ENCODE measurements at regions of chr3 and their contacts with region 1.

Region 1: DNA sequence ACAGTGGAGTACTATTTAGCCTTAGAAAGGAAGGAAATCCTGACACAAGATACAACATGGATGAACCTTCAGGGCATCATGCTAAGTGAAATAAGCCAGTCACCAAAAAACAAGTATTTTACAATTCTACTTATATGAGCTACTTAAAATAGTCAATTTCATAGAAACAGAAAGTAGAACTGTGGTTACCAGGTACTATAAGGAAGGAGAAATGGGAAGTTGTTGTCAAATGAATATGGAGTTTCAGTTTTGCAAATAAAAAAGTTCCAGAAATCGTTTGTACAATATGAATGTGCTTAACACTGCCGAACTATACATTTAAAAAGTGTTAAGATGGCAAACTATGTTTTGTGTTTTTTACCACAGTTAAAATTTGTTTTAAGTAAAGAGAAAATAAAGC is 26.8 kb downstream of the TRANK1 start:
- DNase-seq: no peak
- ATAC-seq: peak; percentile 32
- H3K4me3 ChIP-seq: no peak overlapping the region
- H3K4me3 Mint-ChIP-seq: peak overlapping the region in 9 of 10 donors; percentile 2 to 67 (median 56)
- H3K27ac ChIP-seq: no peak overlapping the region
- H3K27ac Mint-ChIP-seq: peak overlapping the region; percentile 12 to 84 (median 66)
- H3K4me1 ChIP-seq: peaks cover 10 to 11% of the 10 kb centered on the region in 2 donors
- H3K4me1 Mint-ChIP-seq: peaks cover 23 to 40% (median 34%) of the 10 kb centered on the region in 7 donors
- H3K27me3 ChIP-seq: no peaks in the 10 kb centered on the region
- H3K27me3 Mint-ChIP-seq: peaks cover 0 to 2% (median 0%) of the 10 kb centered on the region in 5 donors

Region 2: DNA sequence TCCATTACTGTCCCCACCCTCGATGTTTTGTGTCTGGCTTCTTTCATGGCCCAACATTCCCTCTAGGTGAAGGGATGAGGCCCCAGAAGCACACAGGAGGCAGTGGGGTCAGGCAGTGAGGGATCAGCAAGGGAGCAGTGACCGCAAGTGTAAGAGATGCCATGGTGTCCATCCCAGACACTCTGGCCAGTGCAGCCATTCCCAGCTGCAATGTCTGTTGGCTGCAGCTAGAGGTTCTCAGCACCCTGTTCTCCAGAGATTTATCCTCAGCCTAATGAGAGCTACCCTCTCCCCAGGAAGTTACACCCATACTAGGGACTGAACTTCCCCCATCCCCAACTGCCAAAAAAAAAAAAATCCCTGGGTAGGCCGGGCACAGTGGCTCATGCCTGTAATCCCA is 13.4 kb before region 1 on chr3:
- CTCF ChIA-PET with region 1: interaction called, 3 read pairs
- POLR2A ChIA-PET with region 1: interaction called, 8 read pairs
- intact Hi-C with region 1: loop called in 1 of 2 experiments (anchors 1 kb)
- DNase-seq: no peak
- ATAC-seq: no peak
- H3K4me3 ChIP-seq: no peak overlapping the region
- H3K4me3 Mint-ChIP-seq: peak overlapping the region in 7 of 10 donors; percentile 6 to 95 (median 35)
- H3K27ac ChIP-seq: peak overlapping the region; percentile 26
- H3K27ac Mint-ChIP-seq: peak overlapping the region in 8 of 9 donors; percentile 69 to 97 (median 92)
- H3K4me1 ChIP-seq: peaks cover 42 to 60% of the 10 kb centered on the region in 2 donors
- H3K4me1 Mint-ChIP-seq: peaks cover 54 to 90% (median 84%) of the 10 kb centered on the region in 7 donors
- H3K27me3 ChIP-seq: no peaks in the 10 kb centered on the region
- H3K27me3 Mint-ChIP-seq: no peaks in the 10 kb centered on the region

Measured in naive thymus-derived CD4-positive, alpha-beta T cell (primary cell).